Naive thymus-derived CD4-positive, alpha-beta T cell (primary cell): ENCODE measurements at regions of chr21 and their contacts with region 1.

Region 1: DNA sequence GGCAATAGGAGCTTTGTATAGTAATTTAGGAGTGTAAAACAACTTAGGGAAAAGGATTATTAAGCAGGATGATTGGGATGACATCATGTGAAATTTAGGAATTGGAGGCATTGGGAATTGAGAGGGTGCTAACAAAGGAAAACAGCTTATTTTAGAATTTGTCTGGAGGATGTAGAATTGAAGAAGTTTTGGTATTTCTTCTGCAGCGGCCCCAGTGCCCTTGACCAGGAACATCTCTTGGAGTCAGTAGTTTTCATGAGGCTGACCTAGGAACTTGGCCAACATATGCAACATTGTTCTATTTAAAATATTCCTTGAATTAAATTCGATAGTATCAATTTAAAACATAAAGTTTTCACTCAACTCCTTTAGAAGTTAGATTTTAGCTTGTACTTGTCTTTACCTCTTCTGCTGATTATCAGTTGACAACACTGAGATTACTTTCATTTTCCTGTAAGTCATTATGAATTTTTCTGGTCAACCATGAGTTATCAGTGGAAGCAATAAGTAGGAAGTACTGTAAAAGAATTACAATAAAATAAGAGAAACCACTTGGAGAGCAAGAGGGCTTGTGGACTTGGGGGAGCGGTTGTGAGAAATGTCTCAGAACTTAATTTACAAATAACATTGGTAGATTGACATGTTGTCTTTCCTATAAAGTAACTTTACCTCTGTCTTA is 52.8 kb downstream of the DYRK1A start:
- DNase-seq: no peak
- ATAC-seq: no peak
- H3K4me3 ChIP-seq: no peak overlapping the region
- H3K4me3 Mint-ChIP-seq: peak overlapping the region in 7 of 10 donors; percentile 40 to 76 (median 60)
- H3K27ac ChIP-seq: no peak overlapping the region
- H3K27ac Mint-ChIP-seq: peak overlapping the region; percentile 8 to 89 (median 73)
- H3K4me1 ChIP-seq: peaks cover 35 to 36% of the 10 kb centered on the region in 2 donors
- H3K4me1 Mint-ChIP-seq: peaks cover 46 to 95% (median 94%) of the 10 kb centered on the region in 7 donors
- H3K27me3 ChIP-seq: no peaks in the 10 kb centered on the region
- H3K27me3 Mint-ChIP-seq: no peaks in the 10 kb centered on the region

Region 2: GRCh38 chr21:37407719-37408420 is 11.5 kb before region 1 on chr21:
- CTCF ChIA-PET with region 1: no interaction called
- POLR2A ChIA-PET with region 1: no interaction called
- intact Hi-C with region 1: loop called in 1 of 2 experiments (anchors 1 kb)
- DNase-seq: no peak
- ATAC-seq: no peak
- H3K4me3 ChIP-seq: no peak overlapping the region
- H3K4me3 Mint-ChIP-seq: peak overlapping the region in 9 of 10 donors; percentile 10 to 71 (median 42)
- H3K27ac ChIP-seq: no peak overlapping the region
- H3K27ac Mint-ChIP-seq: peak overlapping the region in 7 of 9 donors; percentile 33 to 76 (median 39)
- H3K4me1 ChIP-seq: peaks cover 58 to 71% of the 10 kb centered on the region in 2 donors
- H3K4me1 Mint-ChIP-seq: peaks cover 65 to 97% (median 93%) of the 10 kb centered on the region in 7 donors
- H3K27me3 ChIP-seq: no peaks in the 10 kb centered on the region
- H3K27me3 Mint-ChIP-seq: no peaks in the 10 kb centered on the region